ENCODE measurements at regions of chr12 and their contacts with region 1.

Region 1: DNA sequence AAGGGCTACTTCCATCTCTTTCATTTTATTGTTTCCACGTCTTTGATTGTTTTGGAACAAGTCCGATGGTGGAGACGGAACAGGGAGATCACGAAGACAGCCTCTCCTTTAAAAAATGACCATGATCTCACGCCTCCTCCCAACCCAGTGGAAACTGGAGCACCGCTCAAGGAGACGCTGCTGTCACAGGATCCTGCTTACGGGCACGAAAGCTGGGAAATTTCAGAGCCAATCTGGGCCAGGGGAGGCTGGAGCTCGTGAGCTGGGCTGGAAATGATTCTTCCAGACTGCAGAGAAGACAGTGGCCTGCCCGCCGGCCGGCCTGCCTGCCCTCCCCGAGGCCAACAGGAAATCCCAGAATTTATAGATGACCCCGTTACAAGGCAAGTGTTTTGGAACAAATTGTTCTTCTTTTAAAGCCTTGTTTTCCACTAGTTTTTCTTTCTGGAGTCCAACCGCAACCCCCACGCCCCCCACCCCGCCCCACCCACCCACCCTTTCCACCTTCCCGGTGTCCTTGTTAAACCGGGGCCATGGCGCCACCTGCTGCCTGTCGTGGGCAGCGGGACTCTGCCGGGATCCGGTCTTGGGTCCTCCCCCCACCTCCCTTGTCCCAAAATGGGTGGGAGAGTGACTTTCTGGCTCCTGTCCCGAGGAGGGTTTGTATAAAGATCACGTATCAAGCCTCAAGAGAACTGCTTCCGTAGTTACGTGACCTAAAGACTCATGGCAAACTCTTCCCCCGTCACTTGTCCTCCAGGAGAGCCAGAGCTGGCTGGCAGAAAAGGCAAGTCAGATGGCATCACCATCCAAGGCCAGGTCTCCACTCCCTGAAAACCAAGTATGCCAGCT is 40.3 kb downstream of the MAP1LC3B2 start:
- DNase-seq: peak; percentile 67
- H3K4me3 ChIP-seq: no peak overlapping the region
- H3K27ac ChIP-seq: no peak overlapping the region
- H3K4me1 ChIP-seq: no peaks in the 10 kb centered on the region
- CTCF ChIP-seq: peak; percentile 69

Region 2: GRCh38 chr12:115998119-115998633 is 601.3 kb before region 1 on chr12:
- CTCF ChIA-PET with region 1: no interaction called
- POLR2A ChIA-PET with region 1: no interaction called
- intact Hi-C with region 1: loop called (anchors 10 kb)
- DNase-seq: peak; percentile 50
- H3K4me3 ChIP-seq: no peak overlapping the region
- H3K27ac ChIP-seq: no peak overlapping the region
- H3K4me1 ChIP-seq: peaks cover 5% of the 10 kb centered on the region
- CTCF ChIP-seq: peak; percentile 98

Region 3: DNA sequence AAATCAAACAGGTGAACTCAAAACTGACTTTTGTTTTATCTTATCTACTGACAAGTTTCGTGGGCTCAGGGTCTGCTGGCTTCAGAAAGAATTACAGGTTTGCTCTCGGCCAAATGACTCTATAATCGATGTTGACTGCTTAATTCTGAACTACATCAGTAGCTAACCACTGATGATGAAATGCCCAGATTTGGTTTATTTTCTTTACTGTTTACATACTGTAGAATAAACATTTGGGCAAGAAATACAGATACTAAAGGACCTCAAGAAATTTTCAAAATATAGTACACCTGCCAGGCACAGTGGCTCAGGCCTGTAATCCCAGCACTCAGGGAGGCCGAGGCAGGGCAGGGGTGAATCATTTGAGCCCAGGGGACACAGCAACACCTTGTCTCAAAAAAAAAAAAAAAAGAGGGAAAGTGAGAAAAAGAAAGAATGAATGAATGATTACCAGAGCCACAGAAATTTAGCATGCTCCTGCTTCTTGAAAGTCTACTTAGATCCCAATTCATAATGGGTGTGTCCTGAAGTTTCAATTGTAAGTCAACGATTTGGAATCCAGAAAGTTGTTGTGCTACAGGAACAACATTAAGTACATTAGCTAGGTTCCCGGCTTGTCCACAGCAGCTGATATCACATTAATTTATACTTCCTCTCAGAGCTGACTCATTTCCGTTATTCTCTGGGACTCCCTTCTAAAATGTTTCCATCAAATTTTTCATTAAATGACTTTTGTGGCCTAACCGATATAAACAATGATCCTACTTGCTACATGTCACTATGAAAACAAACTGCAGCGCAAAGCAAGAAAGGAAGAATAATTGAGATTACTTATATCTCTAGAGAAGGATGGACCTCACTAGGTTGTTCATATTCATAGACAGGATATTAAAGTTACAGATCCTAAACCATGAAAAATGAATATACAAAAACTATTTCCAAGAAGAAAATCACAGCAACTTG is 456.3 kb before region 1 on chr12:
- CTCF ChIA-PET with region 1: no interaction called
- POLR2A ChIA-PET with region 1: no interaction called
- intact Hi-C with region 1: loop called (anchors 5 kb)
- DNase-seq: no peak
- H3K4me3 ChIP-seq: no peak overlapping the region
- H3K27ac ChIP-seq: no peak overlapping the region
- H3K4me1 ChIP-seq: peaks cover 8% of the 10 kb centered on the region
- CTCF ChIP-seq: no peak

Region 4: GRCh38 chr12:116277393-116278278 is 321.9 kb before region 1 on chr12 and contains the start of gene MED13L:
- CTCF ChIA-PET with region 1: no interaction called
- POLR2A ChIA-PET with region 1: interaction called, 3 read pairs
- intact Hi-C with region 1: loop called (anchors 5 kb)
- DNase-seq: peak; percentile 93
- H3K4me3 ChIP-seq: peak within 1 kb of the TSS; percentile 77
- H3K27ac ChIP-seq: no peak within 1 kb of the TSS
- H3K4me1 ChIP-seq: peaks cover 15% of the 10 kb centered on the region
- CTCF ChIP-seq: no peak; the same call in 1 of the 2 replicates
- total RNA-seq, gene MED13L: 20.1 and 25.7 TPM in 2 replicates

Region 5: DNA sequence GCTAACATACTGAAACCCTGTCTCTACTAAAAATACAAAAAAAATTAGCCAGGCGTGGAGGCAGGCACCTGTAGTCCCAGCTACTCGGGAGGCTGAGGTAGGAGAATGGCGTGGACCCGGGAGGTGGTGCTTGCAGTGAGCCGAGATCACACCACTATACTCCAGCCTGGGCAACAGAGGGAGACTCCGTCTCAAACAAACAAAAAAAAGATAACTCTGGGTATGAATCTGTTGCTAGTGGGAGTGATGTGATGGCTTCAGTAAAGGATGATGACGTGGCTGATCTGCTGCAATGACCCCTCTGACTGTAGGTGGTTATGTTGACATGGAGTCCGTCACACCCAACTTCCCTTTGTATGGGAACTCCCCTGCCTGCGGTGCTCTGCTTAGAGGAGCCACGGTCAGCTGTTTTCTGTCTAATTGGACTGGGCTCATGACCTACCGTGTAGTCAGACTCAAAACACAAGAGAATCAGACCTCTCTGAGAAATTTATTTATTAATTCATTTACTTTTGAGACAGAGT is 262.9 kb before region 1 on chr12:
- CTCF ChIA-PET with region 1: no interaction called
- POLR2A ChIA-PET with region 1: no interaction called
- intact Hi-C with region 1: loop called (anchors 10 kb)
- DNase-seq: no peak
- H3K4me3 ChIP-seq: no peak overlapping the region
- H3K27ac ChIP-seq: no peak overlapping the region
- H3K4me1 ChIP-seq: no peaks in the 10 kb centered on the region
- CTCF ChIP-seq: no peak